ENCODE measurements at regions of chr15 and their contacts with region 1.

Region 1: DNA sequence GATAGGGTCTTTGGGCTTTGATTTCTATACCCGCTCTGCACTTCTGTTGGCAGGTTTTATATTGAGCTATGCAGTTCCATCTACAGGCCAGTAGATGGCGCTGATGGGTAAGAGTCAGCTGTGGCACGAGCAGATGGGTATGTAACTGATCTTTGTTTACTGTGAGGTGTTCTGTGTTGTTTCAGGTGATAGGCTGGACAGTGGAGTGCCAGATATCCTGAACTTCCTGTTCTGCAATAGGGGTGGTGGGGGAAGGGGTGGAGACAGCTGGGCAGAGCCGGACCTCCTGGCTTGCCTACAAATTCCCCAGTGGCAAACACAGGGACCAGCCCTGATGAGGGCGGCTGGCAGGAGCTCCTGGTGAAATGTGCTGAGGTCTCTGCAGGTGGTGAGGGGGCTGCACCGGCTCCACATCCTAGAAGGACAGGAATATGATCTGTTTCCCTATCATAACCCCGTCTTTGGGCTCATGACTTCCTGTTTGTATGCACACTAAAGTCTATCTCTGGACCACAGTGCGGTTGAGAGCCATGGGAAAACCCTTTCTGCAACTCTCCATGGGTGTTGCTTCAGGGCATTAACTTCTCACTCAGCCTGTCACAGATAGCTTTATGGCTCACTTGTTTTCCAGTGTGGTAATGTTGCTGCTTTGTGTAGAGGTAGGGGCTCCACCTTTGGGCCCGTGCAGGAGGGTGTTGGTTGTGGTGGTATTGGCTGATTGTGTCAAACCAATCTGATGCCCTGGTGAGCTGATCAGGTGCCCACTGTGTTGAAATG is 13.4 kb upstream of the FAM98B start:
- DNase-seq: peak; percentile 70
- H3K4me3 ChIP-seq: no peak overlapping the region
- H3K27ac ChIP-seq: no peak overlapping the region
- H3K4me1 ChIP-seq: peaks cover 3% of the 10 kb centered on the region
- CTCF ChIP-seq: peak; percentile 98

Region 2: DNA sequence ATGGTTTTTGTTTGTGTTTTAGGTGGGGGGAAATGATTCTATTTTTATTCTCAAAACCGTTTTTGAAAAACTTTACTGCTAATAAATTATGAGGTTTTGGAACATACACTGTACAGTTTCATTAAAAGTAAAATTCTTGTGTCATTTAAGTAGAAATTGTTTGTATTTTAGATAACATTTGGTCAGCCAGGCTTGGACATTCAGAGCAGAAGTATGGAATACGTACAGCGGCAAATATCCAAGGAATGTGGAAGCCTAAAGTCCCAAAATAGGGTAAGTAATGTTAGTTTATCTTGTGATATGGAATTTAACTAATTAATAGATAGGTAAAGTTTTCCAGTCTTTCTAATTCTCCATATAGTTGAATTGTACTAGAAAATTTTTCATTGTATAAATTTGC is 91.3 kb before region 1 on chr15:
- CTCF ChIA-PET with region 1: no interaction called
- POLR2A ChIA-PET with region 1: no interaction called
- intact Hi-C with region 1: no loop called
- DNase-seq: no peak
- H3K4me3 ChIP-seq: no peak overlapping the region
- H3K27ac ChIP-seq: no peak overlapping the region
- H3K4me1 ChIP-seq: no peaks in the 10 kb centered on the region
- CTCF ChIP-seq: no peak

Region 3: DNA sequence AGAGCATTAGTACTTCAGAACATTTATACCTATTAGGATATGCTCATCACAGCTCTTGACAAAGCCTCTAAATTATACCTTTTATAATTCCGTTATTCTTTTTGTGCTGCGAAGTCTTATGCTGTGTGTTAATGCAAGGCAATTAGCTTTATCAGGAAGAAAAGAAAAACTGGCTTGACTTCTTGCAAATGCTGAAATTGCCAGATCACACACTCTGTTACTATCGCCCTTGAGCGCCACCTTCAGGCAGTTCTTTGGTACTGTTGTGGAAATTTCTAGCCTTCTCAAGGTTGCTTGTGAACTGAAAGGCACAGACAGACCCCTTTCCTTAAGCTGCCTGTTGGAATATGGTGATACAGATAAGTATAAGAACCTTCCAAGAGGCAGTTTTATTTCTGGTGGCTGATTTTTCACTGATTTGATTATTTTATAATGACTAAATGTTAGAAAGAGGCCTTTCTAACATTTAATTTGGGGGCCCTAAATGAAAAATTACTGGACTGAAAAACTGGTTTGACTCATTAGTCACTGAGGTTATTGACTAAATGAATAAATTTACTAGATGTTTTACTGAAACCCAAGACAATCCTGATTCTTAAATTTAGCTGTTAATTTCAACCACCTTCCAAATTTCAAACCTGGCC is 250.3 kb after region 1 on chr15:
- CTCF ChIA-PET with region 1: interaction called, 6 read pairs
- POLR2A ChIA-PET with region 1: interaction called, 6 read pairs
- intact Hi-C with region 1: loop called (anchors 1 kb)
- DNase-seq: peak; percentile 83
- H3K4me3 ChIP-seq: no peak overlapping the region
- H3K27ac ChIP-seq: no peak overlapping the region
- H3K4me1 ChIP-seq: peaks cover 27% of the 10 kb centered on the region
- CTCF ChIP-seq: peak; percentile 97

Measured in OCI-LY7 (cell line).